ENCODE measurements at regions of chr1 and their contacts with region 1.

Region 1: GRCh38 chr1:220272047-220272840 is at the start of gene RAB3GAP2:
- DNase-seq: peak; percentile 98
- ATAC-seq: peak; percentile 95
- H3K4me3 Mint-ChIP-seq: no peak within 1 kb of the TSS
- H3K27ac Mint-ChIP-seq: no peak within 1 kb of the TSS
- H3K4me1 Mint-ChIP-seq: peaks cover 14% of the 10 kb centered on the region
- H3K27me3 Mint-ChIP-seq: peaks cover 4% of the 10 kb centered on the region
- total RNA-seq, gene RAB3GAP2: 50.6 to 67.3 TPM

Region 2: GRCh38 chr1:218284934-218285635 is 1987.2 kb before region 1 on chr1 and contains the start of gene RRP15:
- CTCF ChIA-PET with region 1: no interaction called
- POLR2A ChIA-PET with region 1: interaction called, 3 read pairs
- intact Hi-C with region 1: loop called in 1 of 2 experiments (anchors 1 kb)
- DNase-seq: peak; percentile 93
- ATAC-seq: peak; percentile 99
- H3K4me3 Mint-ChIP-seq: peak within 1 kb of the TSS; percentile 94
- H3K27ac Mint-ChIP-seq: peak within 1 kb of the TSS; percentile 91
- H3K4me1 Mint-ChIP-seq: peaks cover 32% of the 10 kb centered on the region
- H3K27me3 Mint-ChIP-seq: peaks cover 10% of the 10 kb centered on the region
- total RNA-seq, gene RRP15: 23.3 to 30.5 TPM

Region 3: DNA sequence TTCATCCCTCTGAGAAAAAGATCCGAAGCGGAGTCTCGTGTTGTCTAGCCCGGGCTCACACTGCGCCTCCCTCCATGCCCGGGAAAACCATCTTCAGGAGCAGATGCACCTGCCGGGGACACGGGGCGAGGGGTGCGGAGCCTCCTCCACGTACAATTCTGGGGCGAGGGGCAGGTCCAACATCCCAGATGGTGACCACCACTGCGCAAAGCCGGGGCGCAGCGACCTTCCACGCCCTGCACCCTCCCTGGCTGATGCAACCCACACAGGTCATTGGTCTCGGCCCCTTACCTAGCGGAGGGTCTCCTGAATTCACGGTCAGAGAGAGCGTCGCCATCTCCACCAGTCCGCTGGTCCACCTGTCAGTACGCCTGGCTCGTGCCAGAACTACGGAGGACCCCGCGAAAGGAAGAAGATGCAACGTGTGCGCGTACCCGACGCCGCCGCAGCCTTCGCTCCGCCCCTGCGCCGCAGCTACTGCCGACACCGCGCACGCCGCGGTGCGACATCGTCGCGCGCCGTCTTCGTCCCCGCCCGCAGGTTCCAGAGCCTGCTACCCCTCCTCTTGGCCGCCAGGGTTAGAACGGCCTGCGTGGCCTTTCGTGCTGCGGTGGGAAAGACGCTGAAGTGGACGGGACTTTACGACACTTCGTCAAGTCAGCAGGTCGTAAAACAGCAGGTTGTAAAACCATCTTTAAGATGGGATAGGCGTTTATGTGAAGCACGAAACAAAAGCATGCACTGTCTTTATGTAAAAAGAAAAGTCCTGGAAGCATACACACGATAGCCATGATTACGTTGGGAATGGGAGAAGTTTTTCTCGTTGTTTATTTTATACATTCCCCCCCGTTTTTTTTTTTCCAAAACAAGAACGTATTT is 226.0 kb before region 1 on chr1 and contains the start of gene EPRS1:
- CTCF ChIA-PET with region 1: no interaction called
- POLR2A ChIA-PET with region 1: interaction called, 3 read pairs
- intact Hi-C with region 1: loop called in 1 of 2 experiments (anchors 1 kb)
- DNase-seq: peak; percentile 96
- ATAC-seq: peak; percentile 98
- H3K4me3 Mint-ChIP-seq: peak within 1 kb of the TSS; percentile 100
- H3K27ac Mint-ChIP-seq: peak within 1 kb of the TSS; percentile 98
- H3K4me1 Mint-ChIP-seq: peaks cover 36% of the 10 kb centered on the region
- H3K27me3 Mint-ChIP-seq: no peaks in the 10 kb centered on the region
- total RNA-seq, gene EPRS1: 229 to 301 TPM

Region 4: DNA sequence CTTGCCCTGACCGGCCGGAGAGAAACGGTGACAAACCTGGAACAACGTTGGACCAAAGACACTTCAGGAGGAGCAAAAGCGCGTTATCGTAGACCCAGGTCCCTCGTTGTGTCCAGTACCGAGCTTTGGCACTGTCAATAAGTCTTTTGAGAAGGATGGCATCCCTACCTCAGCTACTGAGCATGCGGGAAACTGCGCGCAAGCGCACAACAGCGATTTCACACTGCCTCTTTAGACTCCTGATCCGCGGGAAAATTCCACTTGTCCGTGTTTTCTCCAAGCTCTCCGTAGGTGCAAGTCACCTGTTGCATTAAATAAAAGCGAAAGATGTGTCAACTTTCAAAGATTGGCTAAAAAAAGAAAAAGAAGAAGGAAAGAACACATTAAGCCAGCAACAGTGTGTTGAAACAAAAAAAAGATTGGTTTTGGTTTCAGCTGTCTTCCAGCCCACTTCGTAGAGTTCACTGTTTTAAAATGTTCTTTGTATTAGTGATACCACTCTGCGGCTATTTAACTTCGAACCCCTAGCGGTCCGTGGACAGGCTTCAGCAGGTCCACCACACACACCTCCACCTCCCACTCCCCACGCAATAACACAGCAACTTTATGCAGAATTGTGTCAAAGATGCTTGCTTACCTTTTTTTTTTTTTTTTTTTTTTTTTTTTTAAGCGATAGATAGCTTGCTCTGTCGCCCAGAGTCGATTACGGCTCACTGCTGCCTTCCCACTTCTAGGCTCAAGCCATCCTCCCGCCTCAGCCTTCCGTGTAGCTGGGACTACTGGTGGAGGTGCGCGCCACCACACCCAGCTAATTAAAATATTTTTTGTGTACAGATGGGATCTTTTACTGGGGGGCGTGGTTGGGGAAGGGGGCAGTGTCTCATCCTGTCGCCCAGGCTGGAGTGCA is 182.3 kb before region 1 on chr1 and contains the start of gene BPNT1:
- CTCF ChIA-PET with region 1: no interaction called
- POLR2A ChIA-PET with region 1: no interaction called
- intact Hi-C with region 1: loop called (anchors 1 to 10 kb)
- DNase-seq: peak; percentile 98
- ATAC-seq: peak; percentile 81
- H3K4me3 Mint-ChIP-seq: peak within 1 kb of the TSS; percentile 87
- H3K27ac Mint-ChIP-seq: peak within 1 kb of the TSS; percentile 89
- H3K4me1 Mint-ChIP-seq: peaks cover 10% of the 10 kb centered on the region
- H3K27me3 Mint-ChIP-seq: no peaks in the 10 kb centered on the region
- total RNA-seq, gene BPNT1: 24.5 to 26.9 TPM

Region 5: GRCh38 chr1:220217383-220217988 is 54.8 kb before region 1 on chr1:
- CTCF ChIA-PET with region 1: interaction called, 6 read pairs
- POLR2A ChIA-PET with region 1: no interaction called
- intact Hi-C with region 1: loop called (anchors 2 to 5 kb)
- DNase-seq: no peak
- ATAC-seq: no peak
- H3K4me3 Mint-ChIP-seq: no peak overlapping the region
- H3K27ac Mint-ChIP-seq: no peak overlapping the region
- H3K4me1 Mint-ChIP-seq: peaks cover 26% of the 10 kb centered on the region
- H3K27me3 Mint-ChIP-seq: no peaks in the 10 kb centered on the region

Region 6: DNA sequence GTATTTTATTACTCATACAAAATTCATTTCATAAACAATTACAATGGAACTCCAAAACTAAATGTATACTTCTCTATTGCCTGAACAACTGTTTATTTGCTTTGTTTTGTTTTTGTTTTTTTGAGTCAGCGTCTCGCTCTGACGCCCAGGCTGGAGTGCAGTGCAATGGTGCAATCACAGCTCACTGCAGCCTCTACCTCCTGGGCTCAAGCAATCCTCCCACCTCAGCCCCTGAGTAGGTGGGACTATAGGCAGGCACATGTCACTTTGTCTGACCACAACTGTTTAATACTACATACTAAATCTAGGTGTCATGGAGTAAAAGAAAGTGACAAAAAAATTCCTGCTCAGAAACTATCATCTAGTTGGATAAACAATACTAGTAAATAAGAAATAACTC is 49.3 kb before region 1 on chr1:
- CTCF ChIA-PET with region 1: interaction called, 6 read pairs
- POLR2A ChIA-PET with region 1: no interaction called
- intact Hi-C with region 1: loop called (anchors 2 to 5 kb)
- DNase-seq: no peak
- ATAC-seq: no peak
- H3K4me3 Mint-ChIP-seq: no peak overlapping the region
- H3K27ac Mint-ChIP-seq: no peak overlapping the region
- H3K4me1 Mint-ChIP-seq: peaks cover 57% of the 10 kb centered on the region
- H3K27me3 Mint-ChIP-seq: no peaks in the 10 kb centered on the region

Region 7: GRCh38 chr1:220344745-220345144 is 72.5 kb after region 1 on chr1:
- CTCF ChIA-PET with region 1: no interaction called
- POLR2A ChIA-PET with region 1: no interaction called
- intact Hi-C with region 1: no loop called
- DNase-seq: no peak
- ATAC-seq: no peak
- H3K4me3 Mint-ChIP-seq: no peak overlapping the region
- H3K27ac Mint-ChIP-seq: no peak overlapping the region
- H3K4me1 Mint-ChIP-seq: no peaks in the 10 kb centered on the region
- H3K27me3 Mint-ChIP-seq: peaks cover 6% of the 10 kb centered on the region

Region 8: GRCh38 chr1:220370031-220370700 is 97.9 kb after region 1 on chr1:
- CTCF ChIA-PET with region 1: no interaction called
- POLR2A ChIA-PET with region 1: no interaction called
- intact Hi-C with region 1: no loop called
- DNase-seq: no peak
- ATAC-seq: no peak
- H3K4me3 Mint-ChIP-seq: no peak overlapping the region
- H3K27ac Mint-ChIP-seq: no peak overlapping the region
- H3K4me1 Mint-ChIP-seq: no peaks in the 10 kb centered on the region
- H3K27me3 Mint-ChIP-seq: peaks cover 13% of the 10 kb centered on the region

Region 9: GRCh38 chr1:220990427-220991339 is 718.4 kb after region 1 on chr1:
- CTCF ChIA-PET with region 1: no interaction called
- POLR2A ChIA-PET with region 1: no interaction called
- intact Hi-C with region 1: no loop called
- DNase-seq: no peak
- ATAC-seq: no peak
- H3K4me3 Mint-ChIP-seq: no peak overlapping the region
- H3K27ac Mint-ChIP-seq: no peak overlapping the region
- H3K4me1 Mint-ChIP-seq: no peaks in the 10 kb centered on the region
- H3K27me3 Mint-ChIP-seq: peaks cover 5% of the 10 kb centered on the region